ENCODE measurements at regions of chr11 and their contacts with region 1.

Region 1: GRCh38 chr11:119659971-119660723 is 68.9 kb downstream of the NECTIN1 start:
- DNase-seq: no peak
- H3K4me3 ChIP-seq: no peak overlapping the region
- H3K27ac ChIP-seq: peak overlapping the region in 7 of 59 donors; percentile 7 to 96 (median 92)
- H3K27me3 ChIP-seq: no peaks in the 10 kb centered on the region
- CTCF ChIP-seq: no peak

Region 2: GRCh38 chr11:119381181-119381988 is 278.8 kb before region 1 on chr11 and contains the start of gene USP2:
- intact Hi-C with region 1: no loop called
- DNase-seq: peak; percentile 97 to 99 (median 98)
- H3K4me3 ChIP-seq: peak within 1 kb of the TSS; percentile 48 to 95 (median 70)
- H3K27ac ChIP-seq: peak within 1 kb of the TSS in 58 of 59 donors; percentile 5 to 100 (median 86)
- H3K27me3 ChIP-seq: no peaks in the 10 kb centered on the region
- CTCF ChIP-seq: peak; percentile 65 to 99 (median 95)
- total RNA-seq, gene USP2: 32.5 to 68.6 (median 46.7) TPM

Region 3: GRCh38 chr11:119624102-119624615 is 36.0 kb before region 1 on chr11:
- intact Hi-C with region 1: loop called (anchors 5 to 10 kb)
- DNase-seq: no peak
- H3K4me3 ChIP-seq: no peak overlapping the region
- H3K27ac ChIP-seq: peak overlapping the region in 1 of 59 donors; percentile 40
- H3K27me3 ChIP-seq: no peaks in the 10 kb centered on the region
- CTCF ChIP-seq: peak in 54 of 56 donors; percentile 35 to 72 (median 60)

Measured in dorsolateral prefrontal cortex (tissue), 120 donors.